ENCODE measurements at regions of chr16 and their contacts with region 1.

Region 1: GRCh38 chr16:57576429-57576870 is 34.0 kb downstream of the ADGRG5 start:
- DNase-seq: peak; percentile 61 to 92
- H3K4me3 ChIP-seq: no peak overlapping the region
- H3K27ac ChIP-seq: no peak overlapping the region
- H3K4me1 ChIP-seq: no peaks in the 10 kb centered on the region; a peak in 1 of 7 replicates
- H3K27me3 ChIP-seq: peaks cover 0 to 4% (median 0%) of the 10 kb centered on the region in 4 experiments; a peak in 2 of 7 replicates
- CTCF ChIP-seq: peak; percentile 94 to 99 (median 97)
- EP300 ChIP-seq: no peak
- POLR2A ChIP-seq: no peak
- RAD21 ChIP-seq: peak; percentile 91 to 94

Region 2: DNA sequence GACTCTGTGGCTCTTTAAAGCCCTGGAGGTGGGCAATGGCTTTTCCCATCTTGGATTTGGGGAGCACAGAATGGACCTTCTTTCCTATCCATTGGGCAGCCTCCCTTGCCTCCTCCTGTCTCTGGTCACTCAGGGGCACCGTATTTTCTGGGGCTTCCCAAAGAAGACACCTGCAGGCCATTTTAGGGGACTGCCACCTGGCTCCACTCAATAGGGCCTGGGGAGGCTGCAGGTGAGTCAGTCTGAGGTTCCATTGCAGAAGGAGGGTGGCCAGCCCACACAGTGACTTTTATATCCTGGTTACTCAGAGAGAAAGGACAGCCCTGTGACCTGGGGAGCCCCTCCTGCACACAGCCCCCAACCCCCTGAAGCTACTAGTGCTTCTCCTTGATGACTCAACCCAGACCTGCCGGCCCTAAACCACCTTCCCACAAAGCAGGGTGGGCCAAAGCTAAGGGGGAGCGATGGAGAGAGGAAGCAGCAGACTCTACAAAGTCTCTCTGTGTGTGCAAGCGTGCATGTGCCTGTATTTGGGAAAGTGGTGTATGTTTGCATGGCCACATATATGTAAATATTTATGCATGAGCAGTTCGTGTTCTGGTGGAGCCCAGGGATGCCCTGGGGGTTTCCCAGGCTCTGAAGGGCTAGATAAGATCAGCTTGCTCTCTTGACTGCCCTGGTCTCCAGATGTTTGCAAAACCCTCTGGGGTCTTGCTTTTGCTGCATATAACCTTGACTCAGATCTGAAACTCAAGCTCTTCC is 199.2 kb before region 1 on chr16:
- CTCF ChIA-PET with region 1: no interaction called
- POLR2A ChIA-PET with region 1: no interaction called
- DNase-seq: no peak
- H3K4me3 ChIP-seq: no peak overlapping the region
- H3K27ac ChIP-seq: no peak overlapping the region
- H3K4me1 ChIP-seq: peaks cover 0 to 18% (median 15%) of the 10 kb centered on the region in 4 experiments; a peak in 6 of 7 replicates
- H3K27me3 ChIP-seq: no peaks in the 10 kb centered on the region
- CTCF ChIP-seq: peak in 2 of 3 experiments; percentile 28 to 35; a peak in 3 of 4 replicates
- EP300 ChIP-seq: no peak
- POLR2A ChIP-seq: no peak
- RAD21 ChIP-seq: peak in 1 of 2 experiments; percentile 33; a peak in 1 of 4 replicates

Region 3: DNA sequence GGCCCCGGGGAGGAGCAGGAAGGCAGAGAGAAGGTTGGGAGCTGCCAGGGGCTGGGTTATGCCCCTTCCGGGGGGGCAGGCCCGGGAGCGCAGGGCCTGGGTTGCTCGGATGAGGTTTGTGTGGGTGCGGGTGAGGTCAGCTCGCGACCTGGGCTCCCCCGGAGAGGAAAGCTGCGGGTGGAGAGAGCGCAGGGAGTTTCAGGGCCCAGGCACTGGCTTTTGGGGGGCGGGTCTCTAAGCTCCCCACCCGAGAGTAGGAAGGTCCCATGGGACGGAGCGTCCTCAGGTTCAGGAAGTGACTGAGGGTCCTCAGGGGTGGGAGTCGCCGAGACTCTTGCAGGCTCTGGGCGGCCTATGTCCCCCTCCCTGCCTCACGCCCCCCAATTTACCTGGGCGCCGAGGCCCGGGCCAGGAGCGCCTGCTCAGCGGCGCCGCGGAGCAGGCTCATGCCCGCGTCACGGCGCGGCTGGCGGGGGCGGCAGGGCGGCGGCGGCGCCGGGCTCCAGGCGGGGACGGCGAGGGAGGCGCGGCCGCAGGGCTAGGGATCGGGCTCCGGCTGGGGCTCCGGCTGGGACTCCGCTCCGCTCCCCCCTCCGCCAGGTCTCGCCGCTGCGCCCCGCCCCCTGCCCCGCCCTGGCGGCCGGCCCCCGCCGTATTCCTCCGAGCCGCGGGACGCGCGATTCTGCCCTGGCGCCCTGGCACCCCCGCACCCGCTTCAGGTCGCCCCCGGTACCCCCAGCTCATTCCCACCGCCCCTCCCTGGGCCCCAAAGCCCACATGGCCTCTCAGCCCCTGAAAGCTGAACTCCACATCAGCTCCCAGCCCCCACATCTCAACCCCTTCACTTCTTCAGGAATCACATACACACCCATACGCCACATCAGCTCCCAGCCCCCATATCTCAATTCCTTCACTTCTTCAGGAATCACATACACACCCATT is 90.3 kb before region 1 on chr16 and contains the start of gene DOK4:
- CTCF ChIA-PET with region 1: no interaction called
- POLR2A ChIA-PET with region 1: no interaction called
- DNase-seq: peak in 1 of 2 experiments; percentile 91
- H3K4me3 ChIP-seq: peak within 1 kb of the TSS; percentile 53 to 79 (median 72)
- H3K27ac ChIP-seq: no peak within 1 kb of the TSS
- H3K4me1 ChIP-seq: peaks cover 0 to 14% (median 10%) of the 10 kb centered on the region in 4 experiments; a peak in 6 of 7 replicates
- H3K27me3 ChIP-seq: peaks cover 0 to 12% (median 4%) of the 10 kb centered on the region in 4 experiments; a peak in 4 of 7 replicates
- CTCF ChIP-seq: no peak
- EP300 ChIP-seq: no peak
- POLR2A ChIP-seq: no peak
- RAD21 ChIP-seq: no peak
- total RNA-seq, gene DOK4: 28.9 and 29.9 TPM in 2 replicates

Region 4: GRCh38 chr16:57564571-57565270 is 11.7 kb before region 1 on chr16:
- CTCF ChIA-PET with region 1: interaction called, 17 read pairs
- POLR2A ChIA-PET with region 1: interaction called, 3 read pairs
- DNase-seq: no peak
- H3K4me3 ChIP-seq: no peak overlapping the region
- H3K27ac ChIP-seq: no peak overlapping the region
- H3K4me1 ChIP-seq: no peaks in the 10 kb centered on the region
- H3K27me3 ChIP-seq: no peaks in the 10 kb centered on the region
- CTCF ChIP-seq: no peak
- EP300 ChIP-seq: no peak
- POLR2A ChIP-seq: no peak
- RAD21 ChIP-seq: no peak

Region 5: DNA sequence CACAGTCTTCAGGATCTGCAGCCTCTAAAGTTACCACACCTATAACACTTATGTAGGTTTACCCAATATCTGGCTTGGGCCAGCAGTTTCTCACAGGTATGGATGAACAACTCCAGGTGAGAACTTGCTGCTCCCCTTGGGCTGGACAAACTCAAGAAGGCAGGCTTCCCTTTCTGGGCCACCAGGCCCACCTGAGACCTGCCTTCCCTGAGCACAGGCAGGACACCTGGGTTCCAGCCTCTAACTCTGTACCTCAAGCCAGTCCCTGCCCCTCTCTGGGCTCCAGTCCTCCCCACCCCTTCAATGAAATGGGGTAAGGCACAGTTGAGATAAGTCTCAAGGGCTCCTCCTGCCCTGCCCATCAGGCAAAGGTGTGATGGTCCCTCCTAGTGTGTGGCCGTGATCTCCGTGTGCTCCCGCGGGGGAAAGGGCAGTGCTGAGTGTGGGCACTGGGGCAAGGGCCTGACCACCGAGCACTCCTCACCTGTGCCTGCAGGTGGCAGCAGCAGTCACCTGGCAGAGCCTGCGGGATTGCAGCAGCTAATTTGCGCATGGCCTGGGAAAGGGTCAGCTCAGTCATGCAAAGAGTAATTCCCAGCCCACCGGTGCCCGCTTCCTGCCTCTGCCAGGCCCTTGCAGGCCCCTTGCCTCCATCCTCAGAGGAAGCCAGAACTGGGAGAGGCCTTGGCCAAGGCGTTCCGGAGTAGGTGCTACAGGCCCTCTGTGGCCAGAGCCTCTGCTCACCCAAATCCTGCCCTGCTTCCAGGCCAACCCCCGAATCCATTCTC is 23.8 kb after region 1 on chr16:
- CTCF ChIA-PET with region 1: interaction called, 36 read pairs
- POLR2A ChIA-PET with region 1: no interaction called
- DNase-seq: peak; percentile 59 to 87
- H3K4me3 ChIP-seq: no peak overlapping the region
- H3K27ac ChIP-seq: no peak overlapping the region
- H3K4me1 ChIP-seq: no peaks in the 10 kb centered on the region; a peak in 1 of 7 replicates
- H3K27me3 ChIP-seq: no peaks in the 10 kb centered on the region; a peak in 1 of 7 replicates
- CTCF ChIP-seq: peak; percentile 95 to 100 (median 99)
- EP300 ChIP-seq: no peak
- POLR2A ChIP-seq: no peak
- RAD21 ChIP-seq: peak; percentile 81 to 86

Region 6: DNA sequence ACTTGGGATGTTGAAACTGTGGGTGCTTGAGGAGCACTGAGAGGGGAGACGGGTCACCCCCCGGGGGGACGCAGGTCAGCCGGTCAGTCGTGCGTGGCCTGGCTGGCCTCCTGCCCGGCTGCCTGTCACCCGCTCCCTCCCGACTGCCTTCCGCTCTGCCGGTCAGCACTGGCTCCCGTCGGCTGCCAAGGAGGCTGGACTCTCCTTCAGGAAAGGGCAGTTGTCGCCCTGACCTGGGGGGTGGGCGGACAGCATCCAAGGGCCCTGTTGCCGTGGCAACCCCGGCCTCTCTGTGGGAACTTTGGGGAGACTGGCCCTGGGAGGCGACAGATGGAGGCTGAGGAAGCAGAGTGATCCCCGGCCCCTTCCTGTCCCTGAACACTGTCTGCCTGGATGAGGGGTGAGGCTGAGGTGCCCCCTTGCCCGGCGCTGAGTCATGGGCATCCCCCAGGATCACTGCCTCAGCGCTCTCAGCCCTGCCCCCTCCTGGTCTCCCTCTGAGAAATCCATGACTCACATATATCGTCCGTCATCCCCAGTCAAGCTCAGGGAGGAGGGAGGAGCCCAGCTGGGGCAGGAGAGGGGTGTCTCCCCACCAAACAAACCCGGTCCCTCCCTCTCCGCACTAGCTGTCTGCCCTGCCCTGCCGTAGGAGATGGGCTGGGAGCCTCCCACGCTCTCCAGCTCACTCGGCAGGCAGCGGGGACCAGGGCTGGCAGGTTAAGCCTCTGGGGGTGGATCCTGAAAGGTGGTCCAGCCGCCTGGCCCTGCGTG is 51.7 kb after region 1 on chr16 and contains the start of gene ADGRG1:
- CTCF ChIA-PET with region 1: interaction called, 12 read pairs
- POLR2A ChIA-PET with region 1: no interaction called
- DNase-seq: peak; percentile 65 to 72
- H3K4me3 ChIP-seq: peak within 1 kb of the TSS in 1 of 4 experiments; percentile 49; a peak in 2 of 8 replicates
- H3K27ac ChIP-seq: no peak within 1 kb of the TSS
- H3K4me1 ChIP-seq: peaks cover 0 to 21% (median 15%) of the 10 kb centered on the region in 4 experiments; a peak in 6 of 7 replicates
- H3K27me3 ChIP-seq: peaks cover 0 to 2% (median 0%) of the 10 kb centered on the region in 4 experiments; a peak in 2 of 7 replicates
- CTCF ChIP-seq: peak; percentile 15 to 38 (median 26); a peak in 3 of 4 replicates
- EP300 ChIP-seq: no peak
- POLR2A ChIP-seq: no peak
- RAD21 ChIP-seq: peak in 1 of 2 experiments; percentile 21; a peak in 1 of 4 replicates
- total RNA-seq, gene ADGRG1: 0.78 and 1.3 TPM in 2 replicates

Region 7: GRCh38 chr16:57648590-57649442 is 72.4 kb after region 1 on chr16:
- CTCF ChIA-PET with region 1: interaction called, 88 read pairs
- POLR2A ChIA-PET with region 1: no interaction called
- DNase-seq: peak; percentile 65 to 98
- H3K4me3 ChIP-seq: no peak overlapping the region
- H3K27ac ChIP-seq: no peak overlapping the region
- H3K4me1 ChIP-seq: peaks cover 0 to under 1% (median 0%) of the 10 kb centered on the region in 4 experiments; a peak in 3 of 7 replicates
- H3K27me3 ChIP-seq: 0 out of 7 replicates have a peak, but pooled peaks cover 0 to 3% (median 0%) of the 10 kb centered on the region in 4 experiments
- CTCF ChIP-seq: peak; percentile 100
- EP300 ChIP-seq: no peak
- POLR2A ChIP-seq: no peak
- RAD21 ChIP-seq: peak; percentile 99

Region 8: DNA sequence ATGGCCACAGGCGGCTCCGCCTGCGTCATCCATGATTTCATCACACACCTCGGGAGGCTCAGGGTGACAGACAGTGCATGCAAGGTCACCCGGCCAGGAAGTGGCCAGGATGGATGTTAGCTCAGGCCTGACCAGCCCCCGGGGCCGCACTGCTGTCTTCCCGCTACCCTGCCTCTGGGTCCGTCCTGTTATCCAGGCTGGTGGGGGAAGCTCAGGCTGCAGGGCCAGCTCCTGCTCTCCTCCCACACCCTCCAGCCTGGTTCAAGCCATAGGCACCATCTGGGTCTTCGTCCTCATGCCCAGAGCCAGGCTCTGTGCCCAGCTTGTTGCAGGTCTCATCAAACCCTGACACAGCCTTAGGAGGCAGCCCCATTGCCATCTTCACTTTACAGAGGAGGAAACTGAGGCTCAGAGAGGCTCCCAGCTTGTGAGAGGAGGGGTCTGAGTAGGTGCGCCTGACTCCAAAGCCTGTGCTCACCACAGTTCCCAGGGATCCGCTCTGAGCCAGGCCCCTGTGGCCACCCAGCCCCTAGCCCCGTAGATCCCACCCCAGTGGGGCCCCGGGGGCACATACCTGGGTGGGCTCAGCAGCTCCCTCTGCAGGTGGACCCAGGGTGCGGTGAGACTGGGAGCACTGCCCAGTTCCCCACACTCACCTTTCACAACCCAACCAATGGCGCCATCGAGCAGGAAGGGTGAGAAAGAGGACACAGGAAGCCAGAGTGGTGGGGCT is 91.2 kb after region 1 on chr16:
- CTCF ChIA-PET with region 1: interaction called, 34 read pairs
- POLR2A ChIA-PET with region 1: no interaction called
- DNase-seq: peak in 1 of 2 experiments; percentile 75
- H3K4me3 ChIP-seq: no peak overlapping the region
- H3K27ac ChIP-seq: no peak overlapping the region
- H3K4me1 ChIP-seq: peaks cover 0 to 4% (median 0%) of the 10 kb centered on the region in 4 experiments; a peak in 3 of 7 replicates
- H3K27me3 ChIP-seq: no peaks in the 10 kb centered on the region
- CTCF ChIP-seq: peak; percentile 64 to 68 (median 65)
- EP300 ChIP-seq: no peak
- POLR2A ChIP-seq: no peak
- RAD21 ChIP-seq: peak; percentile 20 to 47; a peak in 3 of 4 replicates

Region 9: DNA sequence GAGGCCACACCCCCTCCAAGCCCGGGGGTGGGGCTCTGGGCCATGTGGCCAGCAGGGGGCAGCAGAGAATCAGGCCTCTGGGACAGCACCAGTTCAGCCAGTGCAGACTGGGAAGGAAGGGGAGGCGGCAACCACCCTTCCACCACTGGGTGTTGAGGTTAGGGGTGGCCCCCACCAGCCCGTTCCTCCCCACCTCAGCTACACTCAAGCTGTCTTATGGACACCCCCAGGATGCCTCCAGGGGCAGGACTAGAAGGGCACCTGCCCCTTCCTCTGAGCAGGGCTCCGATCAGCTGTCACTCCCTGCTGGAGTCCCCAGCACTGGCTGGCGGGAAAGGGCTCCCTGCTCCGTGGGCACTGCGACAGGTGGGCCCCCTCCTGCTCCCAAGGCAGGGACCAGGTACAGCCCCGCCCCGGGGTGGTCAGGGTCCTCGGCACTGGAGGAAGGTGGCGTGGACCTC is 180.9 kb after region 1 on chr16:
- CTCF ChIA-PET with region 1: interaction called, 11 read pairs
- POLR2A ChIA-PET with region 1: no interaction called
- DNase-seq: peak in 1 of 2 experiments; percentile 99
- H3K4me3 ChIP-seq: no peak overlapping the region
- H3K27ac ChIP-seq: no peak overlapping the region
- H3K4me1 ChIP-seq: peaks cover 0 to 12% (median 7%) of the 10 kb centered on the region in 4 experiments; a peak in 4 of 7 replicates
- H3K27me3 ChIP-seq: no peaks in the 10 kb centered on the region; a peak in 1 of 7 replicates
- CTCF ChIP-seq: peak; percentile 89 to 93 (median 91)
- EP300 ChIP-seq: no peak
- POLR2A ChIP-seq: no peak
- RAD21 ChIP-seq: peak; percentile 86 to 91